ENCODE measurements at regions of chr6 and their contacts with region 1.

Region 1: GRCh38 chr6:31541658-31542521 is at the start of gene DDX39B:
- DNase-seq: peak; percentile 97
- H3K4me3 ChIP-seq: peak within 1 kb of the TSS; percentile 77 to 83
- H3K27ac ChIP-seq: peak within 1 kb of the TSS; percentile 94 to 97
- H3K4me1 ChIP-seq: peaks cover 27% of the 10 kb centered on the region
- H3K27me3 ChIP-seq: no peaks in the 10 kb centered on the region
- CTCF ChIP-seq: no peak
- POLR2A ChIP-seq: peak; percentile 29
- total RNA-seq, gene DDX39B: 312 to 360 TPM

Region 2: DNA sequence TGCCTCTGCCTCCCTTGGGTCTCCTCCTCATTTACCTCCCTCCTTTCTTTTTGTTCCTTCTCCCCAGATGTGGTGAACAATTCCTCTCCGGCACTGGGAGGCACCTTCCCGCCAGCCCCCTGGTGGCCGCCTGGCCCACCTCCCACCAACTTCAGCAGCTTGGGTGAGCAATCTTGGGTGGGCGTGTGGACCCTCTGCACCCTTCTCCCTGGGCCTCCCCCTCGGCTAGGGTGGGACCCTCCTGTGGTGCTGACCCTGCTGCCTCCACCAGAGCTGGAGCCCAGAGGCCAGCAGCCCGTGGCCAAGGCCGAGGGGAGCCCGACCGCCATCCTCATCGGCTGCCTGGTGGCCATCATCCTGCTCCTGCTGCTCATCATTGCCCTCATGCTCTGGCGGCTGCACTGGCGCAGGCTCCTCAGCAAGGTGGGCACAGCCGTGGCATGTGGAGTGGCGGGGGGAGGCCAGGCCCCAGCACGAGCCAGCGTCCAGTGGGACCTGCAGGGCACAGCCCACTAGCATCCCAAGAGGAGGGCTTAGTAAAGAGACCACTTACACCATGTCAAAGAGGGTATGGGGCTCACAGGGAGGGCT is 648.8 kb before region 1 on chr6:
- intact Hi-C with region 1: no loop called
- DNase-seq: no peak
- H3K4me3 ChIP-seq: no peak overlapping the region
- H3K27ac ChIP-seq: no peak overlapping the region
- H3K4me1 ChIP-seq: no peaks in the 10 kb centered on the region
- H3K27me3 ChIP-seq: no peaks in the 10 kb centered on the region
- CTCF ChIP-seq: no peak
- POLR2A ChIP-seq: no peak

Region 3: GRCh38 chr6:31186052-31186734 is 355.7 kb before region 1 on chr6:
- intact Hi-C with region 1: no loop called
- DNase-seq: no peak
- H3K4me3 ChIP-seq: no peak overlapping the region
- H3K27ac ChIP-seq: peak overlapping the region in 1 of 2 donors; percentile 88
- H3K4me1 ChIP-seq: no peaks in the 10 kb centered on the region
- H3K27me3 ChIP-seq: no peaks in the 10 kb centered on the region
- CTCF ChIP-seq: no peak
- POLR2A ChIP-seq: no peak

Region 4: GRCh38 chr6:31597006-31597405 is 55.1 kb after region 1 on chr6:
- intact Hi-C with region 1: loop called (anchors 10 kb)
- DNase-seq: no peak
- H3K4me3 ChIP-seq: no peak overlapping the region
- H3K27ac ChIP-seq: no peak overlapping the region
- H3K4me1 ChIP-seq: peaks cover 3% of the 10 kb centered on the region
- H3K27me3 ChIP-seq: no peaks in the 10 kb centered on the region
- CTCF ChIP-seq: peak in 2 of 3 experiments; percentile 23 to 36
- POLR2A ChIP-seq: no peak